Lower leg skin (tissue), 4 donors: ENCODE measurements at regions of chr2 and their contacts with region 1.

Region 1: DNA sequence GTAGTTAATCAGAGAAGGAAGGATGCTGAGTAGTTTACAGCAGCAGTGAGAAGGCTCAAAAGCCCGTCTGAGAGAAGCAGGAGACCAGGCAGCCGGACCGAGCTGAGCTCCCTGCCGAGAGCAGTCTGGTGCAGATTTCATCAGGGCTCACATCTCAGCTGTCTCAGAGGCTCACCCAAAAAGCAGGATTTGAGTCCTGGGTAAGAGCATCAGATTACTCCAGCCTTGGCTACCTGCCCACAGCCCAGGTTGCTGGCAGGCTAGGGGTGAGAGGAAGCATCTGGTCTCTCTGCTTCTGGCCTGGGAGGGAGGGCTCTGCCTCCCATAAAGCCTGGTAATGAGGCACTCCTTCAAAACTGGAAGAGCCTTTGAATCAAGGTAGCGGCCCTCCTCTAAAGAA is 140.5 kb downstream of the ST6GAL2 start:
- DNase-seq: no peak
- H3K4me3 ChIP-seq: no peak overlapping the region
- CTCF ChIP-seq: no peak
- POLR2A ChIP-seq: no peak

Region 2: DNA sequence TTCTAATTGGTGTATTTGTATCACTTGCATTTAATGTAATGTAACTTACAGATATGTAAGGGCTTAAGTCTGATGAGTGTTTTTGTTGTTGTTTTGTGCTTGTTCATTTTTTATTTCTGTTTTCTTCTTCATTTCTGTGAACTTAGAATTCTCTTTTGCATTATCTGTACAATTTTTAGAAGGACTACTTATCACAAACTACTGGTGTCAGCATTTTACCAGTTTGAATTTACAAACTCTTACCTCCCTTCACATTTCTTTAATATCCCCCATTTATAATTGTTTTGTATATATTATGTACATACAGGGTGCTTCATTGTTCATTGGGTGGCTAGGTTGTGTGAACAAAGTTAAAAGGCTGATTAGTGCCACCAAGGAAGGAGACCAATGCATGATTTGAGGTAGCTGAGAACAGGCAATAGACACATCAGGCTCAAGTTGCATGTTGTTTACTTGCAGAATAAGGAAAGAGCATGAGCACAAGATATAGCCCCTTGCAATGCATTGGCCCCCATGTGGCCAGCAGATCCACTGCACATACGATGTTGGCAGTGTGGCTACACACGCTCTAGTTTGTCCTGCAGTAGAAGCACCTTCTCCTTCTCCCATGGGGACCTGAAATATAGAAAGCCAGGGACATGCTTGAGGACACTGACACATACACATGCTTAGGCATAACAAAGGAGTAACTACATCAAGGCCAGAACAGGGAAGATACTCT is 60.1 kb before region 1 on chr2:
- intact Hi-C with region 1: no loop called
- DNase-seq: no peak
- H3K4me3 ChIP-seq: no peak overlapping the region
- CTCF ChIP-seq: no peak
- POLR2A ChIP-seq: no peak

Region 3: DNA sequence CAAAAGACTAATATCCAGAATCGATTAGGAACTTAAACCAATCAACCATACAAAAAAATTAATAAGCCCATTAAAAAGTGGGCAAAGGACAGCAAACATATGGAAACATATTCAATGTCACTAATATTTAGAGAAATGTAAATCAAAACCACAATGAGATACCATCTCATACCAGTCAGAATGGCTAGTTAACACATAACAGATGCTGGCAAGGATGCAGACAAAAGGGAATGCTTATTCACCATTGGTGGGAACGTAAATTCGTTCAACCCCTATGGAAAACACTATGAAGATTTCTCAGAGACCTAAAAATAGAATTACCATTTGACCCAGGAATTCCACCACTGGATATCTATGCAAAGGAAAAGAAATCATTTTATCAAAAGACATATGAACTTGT is 608.7 kb after region 1 on chr2:
- intact Hi-C with region 1: loop called (anchors 5 kb)
- DNase-seq: no peak
- H3K4me3 ChIP-seq: no peak overlapping the region
- CTCF ChIP-seq: no peak
- POLR2A ChIP-seq: no peak

Region 4: GRCh38 chr2:108460345-108461037 is 1715.0 kb after region 1 on chr2:
- intact Hi-C with region 1: no loop called
- DNase-seq: no peak
- H3K4me3 ChIP-seq: no peak overlapping the region
- CTCF ChIP-seq: no peak
- POLR2A ChIP-seq: no peak